ENCODE measurements at regions of chr10 and their contacts with region 1.

Region 1: GRCh38 chr10:70455213-70455630 is 13.7 kb upstream of the NODAL start:
- DNase-seq: peak; percentile 85
- ATAC-seq: peak; percentile 77
- H3K4me3 Mint-ChIP-seq: peak overlapping the region; percentile 50
- H3K27ac Mint-ChIP-seq: peak overlapping the region; percentile 99
- H3K4me1 Mint-ChIP-seq: peaks cover 69% of the 10 kb centered on the region
- H3K27me3 Mint-ChIP-seq: peaks cover 42% of the 10 kb centered on the region
- CTCF ChIP-seq: no peak

Region 2: GRCh38 chr10:70381471-70382421 is 73.5 kb before region 1 on chr10:
- CTCF ChIA-PET with region 1: interaction called, 20 read pairs
- POLR2A ChIA-PET with region 1: interaction called, 3 read pairs
- DNase-seq: peak; percentile 62
- ATAC-seq: peak; percentile 16
- H3K4me3 Mint-ChIP-seq: peak overlapping the region; percentile 82
- H3K27ac Mint-ChIP-seq: no peak overlapping the region
- H3K4me1 Mint-ChIP-seq: peaks cover 46% of the 10 kb centered on the region
- H3K27me3 Mint-ChIP-seq: peaks cover 14% of the 10 kb centered on the region
- CTCF ChIP-seq: no peak

Region 3: DNA sequence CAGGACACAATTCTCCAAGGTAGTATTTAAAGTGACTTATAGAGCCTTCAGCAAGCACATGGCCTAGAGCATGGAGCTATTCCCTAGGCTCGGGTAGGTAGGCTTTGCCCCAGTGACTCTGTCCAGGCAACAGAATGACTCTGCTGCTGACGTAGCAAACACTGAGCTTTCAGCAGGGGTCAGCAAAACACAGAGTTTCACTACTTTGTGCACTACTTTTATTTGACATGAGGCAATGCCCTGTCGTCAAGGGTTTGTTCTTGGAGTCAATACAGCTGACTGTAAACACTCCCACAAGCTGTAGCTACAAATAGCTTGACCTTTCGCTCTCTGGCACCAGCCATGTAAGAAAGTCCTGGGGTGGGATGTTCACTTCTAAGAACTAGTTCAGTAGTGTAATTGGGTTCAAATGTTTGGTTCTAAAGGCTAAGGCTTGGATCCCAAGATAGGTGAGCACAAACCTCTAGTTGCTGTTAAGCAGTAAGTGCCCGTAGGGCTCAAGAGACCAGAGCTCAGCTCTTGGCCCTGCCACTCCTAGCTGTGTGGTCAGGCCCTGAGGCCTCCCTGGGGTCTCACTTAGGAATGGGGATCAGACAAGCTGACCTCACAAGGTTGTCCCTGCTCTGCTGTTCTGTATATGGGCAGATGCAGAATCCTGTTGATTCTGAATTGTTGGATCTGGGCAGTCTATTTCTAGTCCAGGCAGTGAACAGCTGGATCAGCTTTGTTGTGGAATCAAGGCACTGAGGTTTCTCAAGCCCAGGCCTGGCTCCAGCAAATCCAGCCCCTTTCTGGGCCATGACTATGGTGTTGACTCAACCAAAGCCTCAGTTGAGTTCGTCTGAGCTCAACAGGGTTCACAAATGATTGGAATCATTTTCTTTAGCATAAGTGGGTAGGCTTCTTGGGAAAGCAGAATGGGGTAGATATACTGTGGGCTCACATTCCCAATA is 24.5 kb before region 1 on chr10:
- CTCF ChIA-PET with region 1: interaction called, 25 read pairs
- POLR2A ChIA-PET with region 1: interaction called, 3 read pairs
- DNase-seq: peak; percentile 33
- ATAC-seq: peak; percentile 35
- H3K4me3 Mint-ChIP-seq: no peak overlapping the region
- H3K27ac Mint-ChIP-seq: peak overlapping the region; percentile 53
- H3K4me1 Mint-ChIP-seq: peaks cover 23% of the 10 kb centered on the region
- H3K27me3 Mint-ChIP-seq: no peaks in the 10 kb centered on the region
- CTCF ChIP-seq: no peak

Region 4: DNA sequence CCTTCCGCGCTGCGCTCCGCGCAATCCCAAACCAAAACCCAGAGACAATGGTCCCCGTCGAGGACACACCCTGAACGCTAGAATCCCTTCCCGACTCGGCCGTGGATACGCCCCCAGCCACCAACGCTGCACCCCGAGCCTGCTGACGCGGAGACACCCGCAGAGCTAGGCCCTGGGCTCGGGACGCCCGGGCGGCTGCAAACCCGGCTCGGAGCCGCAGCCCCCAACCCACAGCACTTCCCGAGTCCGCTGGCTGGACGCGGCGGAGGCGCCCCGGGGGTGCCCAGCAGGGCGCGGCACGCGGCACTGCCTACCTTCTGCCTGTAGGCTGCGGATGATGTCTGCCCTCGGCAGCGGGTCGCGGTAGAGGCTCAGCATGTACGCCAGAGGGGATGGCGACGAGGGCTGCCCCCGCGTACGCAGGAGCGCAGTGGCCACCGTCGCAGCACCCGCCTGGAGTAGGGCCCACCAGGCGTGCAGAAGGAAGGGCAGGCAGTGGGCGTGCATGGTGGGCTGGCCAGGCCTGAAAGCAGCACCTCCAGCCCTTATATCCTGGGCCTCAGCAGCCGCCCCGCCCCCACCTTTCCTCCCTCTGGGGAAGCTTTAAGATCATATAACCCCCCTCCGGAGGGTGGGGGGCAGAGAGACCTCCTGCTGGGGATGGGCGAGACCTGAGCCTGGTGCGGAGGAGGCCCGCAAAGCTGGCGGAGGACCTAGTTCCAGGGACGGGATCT is 13.9 kb before region 1 on chr10 and contains the start of gene NODAL:
- CTCF ChIA-PET with region 1: interaction called, 19 read pairs
- POLR2A ChIA-PET with region 1: interaction called, 16 read pairs
- DNase-seq: peak; percentile 59
- ATAC-seq: peak; percentile 5
- H3K4me3 Mint-ChIP-seq: peak within 1 kb of the TSS; percentile 77
- H3K27ac Mint-ChIP-seq: peak within 1 kb of the TSS; percentile 95
- H3K4me1 Mint-ChIP-seq: peaks cover 72% of the 10 kb centered on the region
- H3K27me3 Mint-ChIP-seq: peaks cover 19% of the 10 kb centered on the region
- CTCF ChIP-seq: no peak
- total RNA-seq, gene NODAL: 41.1 to 57.0 TPM (median 41.5 TPM) in 3 replicates

Region 5: DNA sequence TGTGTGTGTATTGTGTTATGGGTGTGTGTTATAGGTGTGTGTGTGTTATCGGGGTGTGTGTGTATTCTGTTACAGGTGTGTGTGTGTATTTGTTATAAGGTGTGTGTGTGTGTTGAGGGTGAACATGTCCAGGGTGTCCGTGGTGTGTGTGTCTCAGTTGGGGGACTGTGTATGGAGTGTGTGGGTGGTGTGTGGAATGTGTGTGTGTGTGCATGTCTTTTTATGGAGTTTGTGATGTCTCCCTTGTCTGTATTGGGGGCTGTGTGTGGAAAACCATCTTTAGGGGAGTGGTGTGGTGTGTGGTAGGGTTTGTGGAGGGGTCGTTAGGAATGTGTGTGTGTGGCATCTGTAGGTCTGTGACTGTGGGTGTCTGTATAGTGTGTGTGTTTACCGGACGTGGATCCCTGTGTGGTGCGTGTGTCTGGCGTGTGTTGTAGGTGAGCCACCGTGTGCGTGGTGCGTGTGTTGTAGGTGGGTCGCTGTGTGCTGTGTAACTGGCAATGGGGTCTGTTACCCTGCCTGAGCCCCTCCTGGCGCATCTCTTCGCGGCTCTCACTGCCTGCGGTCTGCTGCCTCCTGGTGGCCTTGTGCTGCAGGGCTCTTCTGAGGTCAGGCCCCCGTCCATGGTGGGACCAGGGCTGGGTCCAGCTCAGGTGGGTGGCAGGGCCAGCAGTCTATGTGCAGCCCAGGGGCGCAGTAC is 85.0 kb after region 1 on chr10:
- CTCF ChIA-PET with region 1: interaction called, 187 read pairs
- POLR2A ChIA-PET with region 1: no interaction called
- DNase-seq: peak; percentile 77
- ATAC-seq: peak; percentile 63
- H3K4me3 Mint-ChIP-seq: no peak overlapping the region
- H3K27ac Mint-ChIP-seq: no peak overlapping the region
- H3K4me1 Mint-ChIP-seq: peaks cover 16% of the 10 kb centered on the region
- H3K27me3 Mint-ChIP-seq: no peaks in the 10 kb centered on the region
- CTCF ChIP-seq: peak; percentile 72

Region 6: DNA sequence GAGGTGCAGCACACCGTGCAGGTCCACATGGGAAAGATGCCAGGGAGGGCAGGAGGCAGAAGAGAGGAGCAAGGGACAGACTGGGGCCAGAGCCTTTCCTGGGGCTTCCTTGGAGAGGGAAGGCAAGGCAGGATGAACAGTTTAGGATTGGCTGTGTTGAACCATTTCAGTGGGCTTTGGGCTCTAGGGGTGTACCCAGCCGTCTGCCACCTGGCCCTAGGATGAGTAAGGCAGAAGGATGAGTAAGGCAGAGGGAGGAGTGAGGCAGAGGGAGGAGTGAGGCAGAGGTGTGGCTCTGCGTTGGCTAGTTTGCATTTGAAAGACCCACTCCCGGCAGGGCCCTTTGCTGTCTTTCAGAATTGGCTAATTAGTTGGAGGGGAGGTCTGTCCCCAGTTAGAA is 178.8 kb after region 1 on chr10:
- CTCF ChIA-PET with region 1: no interaction called
- POLR2A ChIA-PET with region 1: no interaction called
- DNase-seq: peak; percentile 57
- ATAC-seq: peak; percentile 100
- H3K4me3 Mint-ChIP-seq: no peak overlapping the region
- H3K27ac Mint-ChIP-seq: 0 out of 2 replicates have a peak overlapping the region, but pooled peaks have one; percentile 53
- H3K4me1 Mint-ChIP-seq: peaks cover 25% of the 10 kb centered on the region
- H3K27me3 Mint-ChIP-seq: no peaks in the 10 kb centered on the region; the same call in 1 of the 2 replicates
- CTCF ChIP-seq: no peak